GM12878 (cell line): ENCODE measurements at regions of chr7 and their contacts with region 1.

Region 1: GRCh38 chr7:111083413-111083812 is 7.5 kb upstream of the LRRN3 start:
- DNase-seq: peak; percentile 88
- ATAC-seq: peak; percentile 98
- H3K4me3 ChIP-seq: no peak overlapping the region
- H3K27ac ChIP-seq: peak overlapping the region; percentile 25; the same call in 1 of the 2 replicates
- H3K4me1 ChIP-seq: peaks cover 38% of the 10 kb centered on the region
- H3K27me3 ChIP-seq: no peaks in the 10 kb centered on the region
- CTCF ChIP-seq: no peak
- EP300 ChIP-seq: peak; percentile 83 to 87; a peak in 3 of 4 replicates
- POLR2A ChIP-seq: no peak
- RAD21 ChIP-seq: peak; percentile 31; the same call in 1 of the 2 replicates

Region 2: DNA sequence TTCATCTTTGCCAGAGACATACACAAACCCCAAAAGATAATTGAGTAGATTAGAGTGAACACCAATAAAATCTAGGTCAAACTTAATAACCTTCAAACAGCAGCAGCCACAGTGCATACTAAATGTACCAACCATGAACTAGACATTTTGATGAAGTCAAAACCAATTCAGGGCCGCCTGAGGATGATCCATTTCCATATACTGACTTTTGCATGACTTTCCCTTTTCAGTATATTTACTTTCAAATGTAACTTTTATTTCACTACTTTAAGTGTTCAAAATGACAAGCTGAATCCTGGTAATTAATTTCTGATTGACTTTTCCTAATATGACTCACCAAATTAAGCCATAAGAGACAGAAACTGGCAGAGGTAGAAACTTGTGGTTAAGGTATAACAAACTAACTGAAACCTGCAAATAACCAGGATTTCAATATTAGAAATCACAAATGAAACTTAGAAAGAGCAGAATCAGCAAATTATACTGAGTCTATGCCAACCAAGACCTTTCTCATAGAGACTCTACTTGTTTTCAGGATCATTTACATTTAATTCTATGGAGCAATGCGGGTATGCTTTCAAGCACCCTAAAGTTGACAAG is 164.4 kb before region 1 on chr7:
- CTCF ChIA-PET with region 1: no interaction called
- POLR2A ChIA-PET with region 1: no interaction called
- RAD21 ChIA-PET with region 1: no interaction called
- SMC1A ChIA-PET with region 1: no interaction called
- in situ Hi-C with region 1: no loop called
- intact Hi-C with region 1: loop called (anchors 5 kb)
- DNase-seq: peak; percentile 28
- ATAC-seq: peak; percentile 93
- H3K4me3 ChIP-seq: no peak overlapping the region
- H3K27ac ChIP-seq: no peak overlapping the region
- H3K4me1 ChIP-seq: no peaks in the 10 kb centered on the region
- H3K27me3 ChIP-seq: no peaks in the 10 kb centered on the region
- CTCF ChIP-seq: no peak
- EP300 ChIP-seq: peak; percentile 53 to 71; a peak in 3 of 4 replicates
- POLR2A ChIP-seq: no peak
- RAD21 ChIP-seq: no peak

Region 3: DNA sequence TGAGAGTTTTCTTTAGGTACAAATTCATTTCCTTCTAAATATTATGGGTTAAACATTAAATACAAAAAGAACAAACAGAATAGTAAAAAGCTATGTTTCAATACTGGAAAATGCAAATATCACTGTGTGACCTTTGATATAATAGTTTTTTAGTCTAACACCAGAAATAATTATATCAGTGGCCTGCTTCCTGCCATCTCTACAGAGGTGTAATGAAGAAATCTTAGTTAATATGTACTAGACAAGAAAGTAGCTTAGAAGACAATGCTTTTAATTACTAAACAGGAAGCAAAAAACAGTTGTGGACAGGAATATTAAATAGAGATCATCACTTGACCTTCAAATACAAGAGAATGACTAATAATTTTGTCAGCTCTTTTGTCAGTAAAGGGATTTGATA is 39.9 kb before region 1 on chr7:
- CTCF ChIA-PET with region 1: interaction called, 3 read pairs
- POLR2A ChIA-PET with region 1: no interaction called
- RAD21 ChIA-PET with region 1: interaction called, 4 read pairs
- SMC1A ChIA-PET with region 1: interaction called, 5 read pairs
- in situ Hi-C with region 1: no loop called
- intact Hi-C with region 1: loop called (anchors 2 kb)
- DNase-seq: no peak
- ATAC-seq: peak; percentile 69
- H3K4me3 ChIP-seq: no peak overlapping the region
- H3K27ac ChIP-seq: no peak overlapping the region
- H3K4me1 ChIP-seq: no peaks in the 10 kb centered on the region
- H3K27me3 ChIP-seq: no peaks in the 10 kb centered on the region
- CTCF ChIP-seq: no peak
- EP300 ChIP-seq: no peak
- POLR2A ChIP-seq: no peak
- RAD21 ChIP-seq: no peak

Region 4: GRCh38 chr7:111138196-111138569 is 54.8 kb after region 1 on chr7:
- CTCF ChIA-PET with region 1: interaction called, 5 read pairs
- POLR2A ChIA-PET with region 1: no interaction called
- RAD21 ChIA-PET with region 1: interaction called, 16 read pairs
- SMC1A ChIA-PET with region 1: interaction called, 14 read pairs
- in situ Hi-C with region 1: no loop called
- intact Hi-C with region 1: no loop called
- DNase-seq: peak; percentile 72
- ATAC-seq: peak; percentile 98
- H3K4me3 ChIP-seq: peak overlapping the region; percentile 40; the same call in 1 of the 2 replicates
- H3K27ac ChIP-seq: peak overlapping the region; percentile 85
- H3K4me1 ChIP-seq: peaks cover 9% of the 10 kb centered on the region; the same call in 1 of the 2 replicates
- H3K27me3 ChIP-seq: no peaks in the 10 kb centered on the region
- CTCF ChIP-seq: no peak
- EP300 ChIP-seq: peak in 1 of 2 experiments; percentile 66; a peak in 2 of 4 replicates
- POLR2A ChIP-seq: no peak
- RAD21 ChIP-seq: no peak